CD4-positive, alpha-beta T cell (primary cell): ENCODE measurements at regions of chr2 and their contacts with region 1.

Region 1: DNA sequence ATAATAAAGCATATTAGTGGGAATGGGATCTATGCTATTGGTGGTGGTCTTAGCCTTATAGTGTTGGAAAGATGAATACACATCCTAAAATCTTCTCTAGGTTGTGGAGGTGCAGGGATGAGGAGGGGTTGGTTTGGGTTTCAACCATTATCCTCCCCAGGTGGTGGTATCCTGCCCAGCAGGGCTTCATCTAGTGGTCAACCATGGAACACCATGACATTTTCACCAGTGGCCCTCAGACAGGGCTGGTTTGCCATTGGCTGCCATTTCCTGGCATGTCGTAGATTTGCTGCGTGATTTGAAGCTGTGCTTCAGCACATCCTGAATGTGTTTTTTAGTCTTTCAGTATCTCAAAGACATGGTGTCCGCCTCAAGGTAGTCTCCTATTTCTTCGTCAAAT is 391.2 kb upstream of the HNRNPA3 start:
- DNase-seq: no peak
- ATAC-seq: no peak
- H3K4me3 ChIP-seq: no peak overlapping the region
- H3K4me3 Mint-ChIP-seq: no peak overlapping the region
- H3K27ac ChIP-seq: no peak overlapping the region
- H3K27ac Mint-ChIP-seq: no peak overlapping the region
- H3K4me1 ChIP-seq: no peaks in the 10 kb centered on the region
- H3K4me1 Mint-ChIP-seq: peaks cover 36% of the 10 kb centered on the region
- H3K27me3 ChIP-seq: no peaks in the 10 kb centered on the region
- H3K27me3 Mint-ChIP-seq: no peaks in the 10 kb centered on the region
- CTCF ChIP-seq: no peak

Region 2: GRCh38 chr2:177419274-177419673 is 597.9 kb after region 1 on chr2:
- CTCF ChIA-PET with region 1: no interaction called
- POLR2A ChIA-PET with region 1: no interaction called
- intact Hi-C with region 1: loop called in 1 of 2 experiments (anchors 10 kb)
- DNase-seq: no peak
- ATAC-seq: no peak
- H3K4me3 ChIP-seq: no peak overlapping the region
- H3K4me3 Mint-ChIP-seq: no peak overlapping the region
- H3K27ac ChIP-seq: no peak overlapping the region
- H3K27ac Mint-ChIP-seq: no peak overlapping the region
- H3K4me1 ChIP-seq: no peaks in the 10 kb centered on the region
- H3K4me1 Mint-ChIP-seq: peaks cover 29% of the 10 kb centered on the region
- H3K27me3 ChIP-seq: no peaks in the 10 kb centered on the region
- H3K27me3 Mint-ChIP-seq: no peaks in the 10 kb centered on the region
- CTCF ChIP-seq: no peak